GM10248 (cell line): ENCODE measurements at regions of chr6 and their contacts with region 1.

Region 1: DNA sequence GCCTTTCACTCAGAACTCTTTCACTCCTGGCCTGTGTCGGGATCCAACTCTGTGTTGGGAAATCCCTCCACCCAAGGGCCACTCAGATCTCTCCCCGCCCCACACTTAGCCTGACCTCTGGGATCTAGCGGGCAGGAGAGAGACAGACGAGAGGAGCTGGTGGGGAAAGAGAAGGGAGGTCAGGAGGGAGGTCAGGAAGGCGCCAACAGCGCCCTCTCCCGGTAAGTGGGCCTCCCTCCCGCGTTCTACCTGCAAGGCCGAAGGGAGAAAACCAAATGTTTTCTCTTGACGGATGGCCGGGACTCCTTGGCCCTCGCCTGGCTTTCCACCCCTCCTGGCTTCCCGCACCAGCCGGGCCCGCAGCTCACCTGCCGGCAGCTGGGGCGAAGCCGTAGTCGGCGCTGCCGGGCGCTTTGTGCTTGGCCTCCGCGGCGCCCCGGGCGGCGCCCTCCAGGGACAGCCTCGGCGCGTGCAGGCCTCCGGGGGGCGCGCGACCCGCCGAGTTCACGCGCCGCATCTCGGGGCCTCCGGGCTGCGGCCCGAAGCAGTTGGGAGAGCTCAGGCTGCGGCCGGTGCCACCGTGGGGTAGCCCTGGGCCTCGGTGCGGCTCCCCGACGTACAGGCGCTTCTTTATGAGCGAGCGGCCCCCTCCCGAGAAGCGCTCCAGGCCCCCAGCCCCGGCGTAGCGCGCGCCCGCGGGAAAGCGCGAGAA is 38.2 kb downstream of the C6orf132 start:
- DNase-seq: peak; percentile 90
- CTCF ChIP-seq: peak; percentile 82

Region 2: DNA sequence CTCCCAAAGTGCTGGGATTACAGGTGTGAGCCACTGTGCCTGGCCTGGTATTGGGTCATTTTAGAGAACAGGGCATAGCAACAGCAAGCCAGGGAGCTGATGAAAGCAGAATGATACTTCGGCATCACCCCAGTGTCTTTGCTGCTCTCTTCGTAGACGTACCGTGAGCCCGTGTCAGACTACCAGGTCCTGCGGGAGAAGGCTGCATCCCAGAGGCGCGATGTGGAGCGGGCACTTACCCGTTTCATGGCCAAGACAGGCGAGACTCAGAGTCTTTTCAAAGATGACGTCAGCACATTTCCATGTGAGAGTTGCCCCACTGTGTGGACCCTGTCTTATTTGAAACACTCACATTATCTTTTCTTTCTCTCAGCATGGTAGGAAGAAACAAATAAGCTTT is 38.1 kb before region 1 on chr6:
- CTCF ChIA-PET with region 1: interaction called, 12 read pairs
- POLR2A ChIA-PET with region 1: no interaction called
- DNase-seq: no peak
- CTCF ChIP-seq: no peak

Region 3: GRCh38 chr6:42086046-42087035 is 17.9 kb before region 1 on chr6:
- CTCF ChIA-PET with region 1: interaction called, 42 read pairs
- POLR2A ChIA-PET with region 1: no interaction called
- DNase-seq: no peak
- CTCF ChIP-seq: no peak

Region 4: DNA sequence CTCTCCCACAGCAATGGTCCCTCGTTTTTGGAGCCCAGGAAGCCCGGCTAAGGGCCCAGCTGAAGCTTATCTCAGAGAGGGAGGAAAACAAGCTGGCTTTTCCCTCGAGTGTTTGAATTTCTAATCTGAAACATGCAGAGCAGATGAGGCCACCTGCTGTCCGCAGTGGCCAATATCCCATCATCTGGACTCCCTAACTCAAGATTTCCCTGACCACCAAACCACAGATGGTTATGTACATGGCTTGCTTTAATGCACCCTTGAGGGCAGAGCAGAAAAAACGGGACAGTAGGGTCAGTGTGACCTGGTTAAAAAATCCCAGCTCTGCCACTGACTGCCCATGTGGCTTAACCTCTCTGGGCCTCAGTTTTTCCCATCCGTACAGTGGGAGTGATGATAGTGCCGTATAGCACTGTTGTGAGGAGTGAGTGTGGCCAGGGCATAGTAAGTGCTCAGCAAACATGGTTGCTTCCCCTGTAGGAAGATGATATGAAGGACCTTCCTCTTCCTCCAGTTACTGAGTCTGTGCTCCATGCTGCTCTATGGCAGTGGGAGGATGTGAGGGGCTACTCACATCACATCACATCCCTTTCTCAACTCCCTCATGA is 24.9 kb after region 1 on chr6:
- CTCF ChIA-PET with region 1: interaction called, 12 read pairs
- POLR2A ChIA-PET with region 1: no interaction called
- DNase-seq: no peak
- CTCF ChIP-seq: no peak

Region 5: GRCh38 chr6:42166444-42167141 is 62.3 kb after region 1 on chr6:
- CTCF ChIA-PET with region 1: interaction called, 16 read pairs
- POLR2A ChIA-PET with region 1: no interaction called
- DNase-seq: peak; percentile 89
- CTCF ChIP-seq: peak; percentile 81